Posterior vena cava (tissue), 2 donors: ENCODE measurements at regions of chr9 and their contacts with region 1.

Region 1: GRCh38 chr9:4939118-4939561 is 45.9 kb upstream of the JAK2 start:
- DNase-seq: no peak

Region 2: GRCh38 chr9:4306066-4306775 is 632.9 kb before region 1 on chr9:
- intact Hi-C with region 1: loop called in 1 of 2 experiments (anchors 5 kb)
- DNase-seq: no peak

Region 3: DNA sequence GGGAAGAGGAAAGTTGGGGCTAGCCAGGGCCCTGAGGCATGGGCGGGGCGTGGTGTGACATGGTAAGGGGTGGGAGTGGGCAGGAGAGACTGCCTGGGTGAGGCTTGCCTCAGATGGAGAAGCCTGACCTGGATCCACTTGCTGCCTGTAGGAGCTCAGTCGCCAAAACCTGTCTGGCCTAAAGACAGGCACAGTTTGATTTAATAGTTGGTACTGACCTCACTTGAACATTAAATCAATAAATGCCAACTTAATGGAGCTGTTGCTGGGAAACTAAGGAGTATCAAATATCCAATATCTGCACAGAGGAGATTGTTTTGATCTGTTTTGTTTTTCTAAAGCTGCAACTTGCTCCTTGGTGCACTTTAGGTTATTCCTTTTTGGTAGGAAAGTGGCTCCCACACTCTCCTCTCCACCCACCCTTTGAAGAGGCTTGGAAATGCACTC is 60.0 kb before region 1 on chr9:
- intact Hi-C with region 1: loop called in 1 of 2 experiments (anchors 2 kb)
- DNase-seq: no peak

Region 4: DNA sequence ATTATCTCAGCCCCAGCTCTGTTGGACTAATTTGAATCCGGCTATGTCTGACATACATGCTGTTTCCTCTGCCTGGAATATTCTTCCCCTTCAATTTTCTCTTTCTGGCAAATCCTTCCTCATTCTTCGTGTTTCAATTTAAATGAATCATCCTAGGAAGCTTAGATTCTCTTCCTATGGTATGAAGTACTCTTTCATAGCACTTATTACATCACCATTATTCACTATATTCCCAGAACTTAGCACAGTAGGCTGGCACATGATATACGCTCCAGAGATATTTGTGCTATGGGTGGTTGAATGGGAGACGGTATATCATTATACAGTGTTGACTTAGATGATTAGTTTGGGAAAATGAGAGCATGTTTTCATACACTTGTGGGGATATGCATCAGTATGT is 45.1 kb before region 1 on chr9:
- intact Hi-C with region 1: no loop called
- DNase-seq: no peak

Region 5: GRCh38 chr9:4955836-4956235 is 16.7 kb after region 1 on chr9:
- intact Hi-C with region 1: no loop called
- DNase-seq: no peak

Region 6: DNA sequence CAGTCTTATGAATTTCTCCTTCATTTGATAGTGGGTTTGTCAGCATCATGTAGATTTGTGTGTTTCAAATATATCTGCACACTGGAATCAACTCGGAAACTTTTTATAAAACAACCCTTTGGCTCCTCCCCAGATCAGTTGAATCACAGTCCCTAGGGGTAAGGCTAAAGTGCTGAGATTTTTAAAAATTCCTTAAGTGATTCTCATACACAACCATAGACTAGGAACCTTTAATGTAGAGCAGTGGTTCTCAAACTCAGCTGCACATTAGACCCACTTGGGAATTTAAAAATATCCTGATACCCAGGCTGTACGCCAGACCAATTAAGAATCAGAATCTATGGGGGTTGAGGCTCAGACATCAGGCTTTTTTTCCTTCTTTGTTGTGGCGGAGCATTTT is 28.4 kb after region 1 on chr9:
- intact Hi-C with region 1: loop called in 1 of 2 experiments (anchors 1 kb)
- DNase-seq: no peak

Region 7: DNA sequence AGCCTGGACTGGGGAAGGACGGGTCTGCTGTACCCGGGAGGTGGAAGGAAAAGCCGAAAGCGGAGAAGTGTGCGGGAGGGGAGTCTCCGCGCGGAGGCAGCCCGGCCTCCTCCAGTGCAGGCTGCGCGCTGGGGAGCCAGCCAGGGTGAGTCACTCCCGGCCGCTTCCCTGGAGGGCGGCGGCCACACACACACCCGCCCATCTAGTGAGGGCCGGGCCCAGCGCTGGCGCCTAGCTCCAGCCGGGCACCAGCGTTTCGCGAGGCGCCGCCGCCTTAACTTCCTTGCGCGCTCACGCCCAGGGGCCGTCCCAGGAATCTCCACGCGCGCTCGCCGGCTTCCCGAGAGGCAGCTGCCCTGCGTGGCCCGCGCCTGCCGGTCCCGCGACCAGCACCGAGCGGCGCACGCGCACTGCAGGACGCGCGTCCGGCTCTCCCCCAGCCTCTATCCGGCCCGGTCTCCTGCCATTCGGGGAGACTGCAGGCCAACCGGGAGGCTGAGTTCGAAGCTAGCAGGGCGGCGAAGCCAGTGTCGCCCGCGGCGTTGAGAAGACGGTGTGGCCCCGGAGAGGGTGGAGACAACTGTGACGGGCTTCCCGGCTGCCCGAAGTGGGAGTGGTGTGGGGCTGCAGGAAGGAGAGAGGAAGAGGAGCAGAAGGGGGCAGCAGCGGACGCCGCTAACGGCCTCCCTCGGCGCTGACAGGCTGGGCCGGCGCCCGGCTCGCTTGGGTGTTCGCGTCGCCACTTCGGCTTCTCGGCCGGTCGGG is 45.7 kb after region 1 on chr9 and contains the start of gene JAK2:
- intact Hi-C with region 1: loop called in 1 of 2 experiments (anchors 10 kb)
- DNase-seq: peak; percentile 98
- total RNA-seq, gene JAK2: 65.8 to 67.2 TPM